Dendritic cell treated with granulocyte-macrophage colony-stimulating factor and Interleukin-4, amounts not matched to agents 40 ng/mL and 50 ng/mL, for 4 days (primary cell): ENCODE measurements at regions of chr7 and their contacts with region 1.

Region 1: DNA sequence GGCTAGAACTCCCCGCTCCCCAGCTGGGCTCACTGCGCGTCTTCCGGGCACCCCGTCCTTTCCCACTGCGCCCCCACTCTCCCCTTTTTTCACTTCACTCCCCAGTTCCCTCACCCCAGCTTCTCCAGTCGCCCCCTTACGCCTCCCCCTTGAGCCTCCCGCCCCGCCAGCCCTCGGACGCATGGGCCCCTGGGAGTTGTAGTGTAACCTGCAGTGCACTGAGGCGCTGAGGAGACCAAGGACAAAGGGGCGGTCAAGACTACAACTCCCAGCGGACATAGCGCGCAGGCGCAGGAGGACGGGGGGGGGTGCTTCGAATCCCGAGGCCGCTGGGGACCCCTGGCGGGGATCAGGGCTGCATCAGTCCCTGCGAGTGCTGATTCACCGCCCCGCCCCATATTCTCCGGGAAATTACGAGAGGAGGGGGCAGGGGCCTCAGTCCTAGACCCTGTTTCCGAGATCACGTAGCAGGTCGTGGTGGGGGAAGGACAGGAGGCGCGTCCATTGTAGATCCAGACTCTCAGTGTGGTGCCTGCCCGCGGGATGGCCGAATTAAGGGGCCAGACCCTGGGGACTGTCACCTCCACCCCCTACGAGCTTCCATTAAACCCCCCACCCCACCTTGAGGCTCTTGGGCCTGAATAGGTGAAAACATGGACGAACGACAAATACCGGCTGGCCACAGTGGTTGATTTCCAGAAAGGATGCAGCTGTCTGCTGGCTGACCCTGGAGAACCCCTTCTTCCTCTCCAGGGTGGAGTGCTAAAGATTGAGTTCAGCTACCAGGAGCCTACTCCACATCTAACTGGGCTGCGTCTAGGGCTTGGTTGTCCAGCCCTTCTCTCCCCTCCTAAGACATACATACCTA is 554 bp upstream of the YWHAG start:
- H3K4me3 Mint-ChIP-seq: peak overlapping the region; percentile 94
- H3K27ac Mint-ChIP-seq: peak overlapping the region; percentile 100
- H3K4me1 Mint-ChIP-seq: peaks cover 53% of the 10 kb centered on the region
- H3K27me3 Mint-ChIP-seq: no peaks in the 10 kb centered on the region

Region 2: DNA sequence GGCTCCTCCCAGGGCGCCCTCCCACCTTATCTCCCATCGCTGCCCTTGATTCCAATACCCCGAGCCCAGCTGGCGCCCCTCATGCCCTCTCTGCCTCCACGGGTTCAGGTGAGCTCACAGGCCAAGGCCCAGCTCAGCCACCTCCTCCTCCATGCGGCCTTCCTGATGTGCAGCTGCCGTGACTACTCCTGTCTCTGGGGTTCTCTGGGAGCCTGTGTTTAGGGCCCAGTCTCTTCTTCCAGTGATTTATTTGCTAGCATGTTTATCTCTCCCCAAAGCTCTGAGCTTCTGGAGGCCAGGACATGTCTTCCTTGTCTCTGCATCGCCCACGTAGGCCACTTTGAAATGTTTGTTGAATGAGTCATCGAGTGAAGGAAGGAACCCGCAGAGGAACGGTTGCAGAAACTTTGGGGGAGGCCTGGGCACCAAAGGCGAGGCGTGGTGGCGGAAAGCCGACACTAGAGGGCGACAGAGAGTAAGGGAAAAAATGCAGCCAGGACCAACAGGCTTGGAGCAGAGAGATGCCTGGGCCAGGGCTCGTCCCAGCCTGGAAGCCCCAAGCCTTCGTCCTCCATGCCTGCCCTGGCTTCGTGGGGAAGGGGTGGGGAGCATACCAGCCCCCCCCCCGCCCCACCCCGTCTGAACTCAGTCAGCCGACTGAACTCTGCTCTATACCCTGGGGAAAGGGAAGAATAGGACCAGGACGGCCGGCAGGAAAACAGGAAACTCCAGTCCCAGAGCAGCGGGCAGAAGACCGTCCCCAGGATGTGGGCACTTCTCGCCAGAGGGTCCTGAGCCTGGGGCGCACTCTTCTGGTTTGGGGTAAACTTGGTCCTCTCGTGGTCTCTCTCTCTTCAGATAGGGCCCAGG is 67.8 kb before region 1 on chr7:
- intact Hi-C with region 1: no loop called
- H3K4me3 Mint-ChIP-seq: peak overlapping the region; percentile 69
- H3K27ac Mint-ChIP-seq: peak overlapping the region; percentile 71
- H3K4me1 Mint-ChIP-seq: peaks cover 57% of the 10 kb centered on the region
- H3K27me3 Mint-ChIP-seq: peaks cover 20% of the 10 kb centered on the region

Region 3: GRCh38 chr7:76372984-76373833 is 13.9 kb after region 1 on chr7:
- intact Hi-C with region 1: no loop called
- H3K4me3 Mint-ChIP-seq: peak overlapping the region; percentile 43
- H3K27ac Mint-ChIP-seq: peak overlapping the region; percentile 84
- H3K4me1 Mint-ChIP-seq: peaks cover 37% of the 10 kb centered on the region
- H3K27me3 Mint-ChIP-seq: no peaks in the 10 kb centered on the region

Region 4: GRCh38 chr7:76393116-76394031 is 34.0 kb after region 1 on chr7:
- intact Hi-C with region 1: loop called (anchors 1 kb)
- H3K4me3 Mint-ChIP-seq: peak overlapping the region; percentile 80
- H3K27ac Mint-ChIP-seq: peak overlapping the region; percentile 90
- H3K4me1 Mint-ChIP-seq: peaks cover 63% of the 10 kb centered on the region
- H3K27me3 Mint-ChIP-seq: no peaks in the 10 kb centered on the region

Region 5: DNA sequence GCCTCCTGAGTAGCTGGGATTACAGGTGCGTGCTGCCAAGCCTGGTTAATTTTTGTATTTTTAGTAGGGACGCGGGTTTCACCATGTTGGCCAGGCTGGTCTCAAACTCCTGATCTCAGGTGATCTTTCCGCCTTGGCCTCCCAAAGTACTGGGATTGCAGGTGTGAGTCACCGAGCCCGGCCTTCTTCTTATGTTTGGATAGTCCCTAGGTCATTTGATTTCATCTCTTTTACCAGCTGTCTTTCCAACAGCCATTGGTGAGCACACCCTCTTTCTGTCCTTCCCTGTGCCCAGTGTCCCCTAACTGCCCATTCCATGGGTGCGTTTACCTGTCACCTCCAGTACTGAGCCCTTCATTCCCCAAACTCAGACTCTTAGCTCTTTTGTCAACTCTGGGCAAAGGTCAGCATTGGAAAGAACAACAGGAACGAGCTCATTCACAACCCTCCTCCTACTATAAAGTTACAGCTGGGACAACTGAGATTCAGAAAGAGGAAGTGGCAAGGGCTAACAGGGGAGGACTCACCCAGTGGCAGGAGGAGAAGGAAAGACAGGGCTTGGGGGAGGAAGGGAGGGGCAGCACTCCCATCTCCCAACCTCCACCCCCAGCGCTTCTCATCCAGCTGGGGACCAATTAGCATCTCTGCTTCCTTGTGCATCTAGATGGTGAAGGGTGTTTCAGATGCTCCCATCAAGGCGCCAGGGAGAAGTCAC is 44.6 kb after region 1 on chr7:
- intact Hi-C with region 1: loop called (anchors 2 kb)
- H3K4me3 Mint-ChIP-seq: peak overlapping the region; percentile 63
- H3K27ac Mint-ChIP-seq: peak overlapping the region; percentile 87
- H3K4me1 Mint-ChIP-seq: peaks cover 56% of the 10 kb centered on the region
- H3K27me3 Mint-ChIP-seq: no peaks in the 10 kb centered on the region